ENCODE measurements at regions of chr22 and their contacts with region 1.

Region 1: GRCh38 chr22:42919199-42919598 is 62.1 kb upstream of the ARFGAP3 start:
- DNase-seq: peak; percentile 44
- H3K4me3 ChIP-seq: peak overlapping the region in 1 of 3 experiments; percentile 10
- H3K27ac ChIP-seq: peak overlapping the region; percentile 65
- H3K4me1 ChIP-seq: peaks cover 48% of the 10 kb centered on the region
- H3K27me3 ChIP-seq: no peaks in the 10 kb centered on the region
- CTCF ChIP-seq: no peak

Region 2: GRCh38 chr22:42939941-42940653 is 20.9 kb after region 1 on chr22:
- CTCF ChIA-PET with region 1: no interaction called
- dilution Hi-C with region 1: no loop called
- in situ Hi-C with region 1: no loop called
- intact Hi-C with region 1: loop called (anchors 2 kb)
- DNase-seq: peak; percentile 72
- H3K4me3 ChIP-seq: no peak overlapping the region
- H3K27ac ChIP-seq: peak overlapping the region; percentile 80
- H3K4me1 ChIP-seq: peaks cover 47% of the 10 kb centered on the region
- H3K27me3 ChIP-seq: no peaks in the 10 kb centered on the region
- CTCF ChIP-seq: no peak

Region 3: GRCh38 chr22:42967933-42968332 is 48.7 kb after region 1 on chr22:
- CTCF ChIA-PET with region 1: no interaction called
- dilution Hi-C with region 1: loop called (anchors 5 kb)
- in situ Hi-C with region 1: no loop called
- intact Hi-C with region 1: no loop called
- DNase-seq: no peak
- H3K4me3 ChIP-seq: no peak overlapping the region
- H3K27ac ChIP-seq: no peak overlapping the region
- H3K4me1 ChIP-seq: peaks cover 22% of the 10 kb centered on the region
- H3K27me3 ChIP-seq: no peaks in the 10 kb centered on the region
- CTCF ChIP-seq: no peak

Region 4: DNA sequence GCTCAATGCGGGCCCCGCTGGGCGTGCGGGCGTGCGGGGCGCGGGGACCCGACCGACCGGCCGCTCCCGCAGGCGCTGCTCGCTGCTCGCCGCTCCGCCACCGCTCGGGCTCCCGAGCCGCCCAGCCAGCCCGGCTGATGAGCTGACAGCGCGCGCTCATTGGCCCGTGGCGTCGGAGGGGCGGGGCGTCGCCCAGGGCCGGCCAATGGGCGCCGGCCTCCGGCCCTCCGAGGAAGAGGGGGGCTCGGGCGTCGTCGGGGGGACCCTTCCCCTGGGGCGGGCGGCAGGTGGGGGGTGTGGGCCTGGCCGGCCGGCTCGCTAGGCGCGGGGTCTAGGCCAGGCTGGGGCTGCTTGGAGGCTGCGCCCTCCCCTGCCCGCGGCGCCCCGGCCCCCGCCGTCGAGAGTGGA is 424.1 kb after region 1 on chr22 and contains the start of gene SCUBE1:
- CTCF ChIA-PET with region 1: no interaction called
- dilution Hi-C with region 1: no loop called
- in situ Hi-C with region 1: no loop called
- intact Hi-C with region 1: no loop called
- DNase-seq: peak; percentile 14
- H3K4me3 ChIP-seq: no peak within 1 kb of the TSS
- H3K27ac ChIP-seq: no peak within 1 kb of the TSS
- H3K4me1 ChIP-seq: no peaks in the 10 kb centered on the region
- H3K27me3 ChIP-seq: peaks cover 16% of the 10 kb centered on the region
- CTCF ChIP-seq: no peak
- total RNA-seq, gene SCUBE1: not detected